Dendritic cell treated with granulocyte-macrophage colony-stimulating factor and Interleukin-4, amounts not matched to agents 40 ng/mL and 50 ng/mL, for 4 days (primary cell): ENCODE measurements at regions of chr13 and their contacts with region 1.

Region 1: DNA sequence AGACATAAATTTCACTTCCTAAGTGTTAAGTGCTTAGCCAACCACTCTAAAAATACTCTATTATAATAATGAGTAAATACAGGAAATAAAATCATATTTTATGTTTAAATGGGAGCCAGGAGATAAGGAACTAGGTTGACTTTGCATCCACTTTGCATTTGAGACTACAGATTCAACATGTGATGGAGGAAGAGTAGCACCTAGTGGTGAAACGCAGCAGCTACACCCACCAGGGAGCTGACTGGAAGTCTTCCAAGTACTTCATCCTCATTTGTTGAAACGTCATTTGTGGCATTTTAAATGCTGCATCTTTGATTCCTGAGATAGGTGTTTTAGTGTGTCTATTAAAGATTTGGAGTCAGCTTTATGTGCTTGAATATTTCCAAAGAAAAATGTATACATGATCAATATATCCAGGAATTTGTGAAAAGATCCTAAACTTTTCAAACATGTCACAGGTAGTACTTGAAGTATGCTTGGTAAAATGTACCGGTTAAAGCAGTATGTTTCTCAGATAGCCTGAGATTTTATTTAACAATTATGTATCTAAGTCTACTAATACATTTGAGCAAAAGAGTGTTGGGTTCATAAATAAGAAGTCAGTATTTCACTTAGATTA is 17.4 kb upstream of the KCTD12 start:
- H3K4me3 Mint-ChIP-seq: no peak overlapping the region
- H3K27ac Mint-ChIP-seq: no peak overlapping the region
- H3K4me1 Mint-ChIP-seq: no peaks in the 10 kb centered on the region
- H3K27me3 Mint-ChIP-seq: peaks cover 21% of the 10 kb centered on the region

Region 2: DNA sequence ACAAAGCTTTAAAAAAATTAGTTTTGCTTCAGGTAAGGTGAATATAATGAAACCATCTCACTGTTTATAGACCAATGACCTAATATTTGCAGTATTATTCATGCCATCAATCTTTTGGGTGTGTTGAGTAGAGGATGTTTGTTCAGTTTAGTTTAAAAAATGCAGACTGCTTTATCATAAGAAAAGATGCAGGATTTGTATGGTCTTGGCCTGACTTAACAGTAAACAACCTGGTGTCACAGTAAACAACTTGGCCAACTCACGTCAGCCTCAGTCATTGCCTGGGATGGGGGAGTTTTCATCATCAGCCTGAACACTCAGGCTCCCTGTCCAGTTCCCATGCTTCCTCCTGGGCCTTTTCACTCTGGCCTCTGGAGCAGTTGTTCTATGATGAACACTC is 1212.5 kb before region 1 on chr13:
- intact Hi-C with region 1: loop called (anchors 10 kb)
- H3K4me3 Mint-ChIP-seq: no peak overlapping the region
- H3K27ac Mint-ChIP-seq: no peak overlapping the region
- H3K4me1 Mint-ChIP-seq: no peaks in the 10 kb centered on the region
- H3K27me3 Mint-ChIP-seq: no peaks in the 10 kb centered on the region

Region 3: DNA sequence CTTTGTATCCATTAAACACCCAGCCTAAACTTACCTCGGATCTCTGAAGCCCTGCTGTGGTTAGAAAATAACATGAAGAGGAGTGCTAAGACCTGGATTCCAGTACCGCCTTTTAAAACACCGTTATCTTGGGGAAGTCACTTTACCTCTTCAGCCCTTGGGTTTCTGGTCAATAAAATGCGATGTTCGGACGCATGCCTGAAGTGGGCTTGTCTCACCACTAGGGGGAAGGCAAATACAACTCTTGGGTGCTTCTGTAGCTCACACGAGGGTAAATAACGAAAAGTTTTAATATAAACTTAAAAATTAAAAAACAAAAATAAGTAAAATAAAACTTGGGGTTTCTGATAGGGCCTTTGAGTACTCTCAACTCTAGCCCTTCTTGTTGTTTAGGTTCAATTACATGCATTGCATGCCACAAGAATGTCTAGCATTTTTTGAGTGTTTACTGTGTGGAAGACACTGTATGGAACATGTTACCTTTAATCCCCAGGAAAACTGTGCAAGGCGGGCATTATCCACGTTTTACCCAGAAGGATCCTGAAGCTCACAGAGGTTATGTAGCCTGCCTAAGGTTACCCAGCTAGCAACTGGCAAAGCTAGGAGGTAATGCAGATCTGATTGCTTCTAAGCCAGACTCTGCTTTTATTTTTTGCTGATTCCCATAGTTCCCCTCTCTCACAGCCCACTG is 1027.1 kb before region 1 on chr13:
- intact Hi-C with region 1: loop called (anchors 5 kb)
- H3K4me3 Mint-ChIP-seq: no peak overlapping the region
- H3K27ac Mint-ChIP-seq: no peak overlapping the region
- H3K4me1 Mint-ChIP-seq: peaks cover 41% of the 10 kb centered on the region
- H3K27me3 Mint-ChIP-seq: peaks cover 14% of the 10 kb centered on the region

Region 4: GRCh38 chr13:76473552-76474134 is 430.0 kb before region 1 on chr13:
- intact Hi-C with region 1: loop called (anchors 5 kb)
- H3K4me3 Mint-ChIP-seq: no peak overlapping the region
- H3K27ac Mint-ChIP-seq: no peak overlapping the region
- H3K4me1 Mint-ChIP-seq: no peaks in the 10 kb centered on the region
- H3K27me3 Mint-ChIP-seq: no peaks in the 10 kb centered on the region

Region 5: GRCh38 chr13:76667551-76667950 is 236.1 kb before region 1 on chr13:
- intact Hi-C with region 1: loop called (anchors 1 kb)
- H3K4me3 Mint-ChIP-seq: no peak overlapping the region
- H3K27ac Mint-ChIP-seq: no peak overlapping the region
- H3K4me1 Mint-ChIP-seq: peaks cover 40% of the 10 kb centered on the region
- H3K27me3 Mint-ChIP-seq: no peaks in the 10 kb centered on the region

Region 6: DNA sequence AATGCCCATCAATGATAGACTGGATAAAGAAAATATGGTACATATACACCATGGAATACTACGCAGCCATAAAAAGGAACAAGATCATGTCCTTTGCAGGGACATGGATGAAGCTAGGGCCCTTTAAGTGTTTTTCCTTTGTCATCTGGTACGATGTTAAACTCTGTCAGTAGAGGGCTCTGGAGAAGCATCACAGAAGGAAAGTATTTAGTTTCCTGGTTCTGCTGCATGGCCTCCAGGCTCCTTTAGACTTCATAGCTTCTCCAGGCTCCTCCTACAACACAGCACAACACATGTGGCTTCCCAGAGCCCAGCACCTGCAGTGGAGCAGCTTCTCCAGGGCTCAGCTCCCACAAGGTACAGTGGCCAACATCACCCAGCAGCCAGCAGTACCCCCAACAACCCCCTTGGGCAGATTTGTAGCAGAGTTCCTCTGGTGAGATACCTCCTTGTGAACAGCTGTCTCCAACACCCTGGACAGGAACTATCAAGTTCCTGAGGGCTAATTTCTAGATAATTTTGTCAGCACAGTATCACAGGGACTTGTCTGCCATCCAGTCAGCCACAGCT is 80.9 kb before region 1 on chr13:
- intact Hi-C with region 1: loop called (anchors 2 kb)
- H3K4me3 Mint-ChIP-seq: peak overlapping the region; percentile 44
- H3K27ac Mint-ChIP-seq: peak overlapping the region; percentile 81
- H3K4me1 Mint-ChIP-seq: peaks cover 45% of the 10 kb centered on the region
- H3K27me3 Mint-ChIP-seq: no peaks in the 10 kb centered on the region

Region 7: DNA sequence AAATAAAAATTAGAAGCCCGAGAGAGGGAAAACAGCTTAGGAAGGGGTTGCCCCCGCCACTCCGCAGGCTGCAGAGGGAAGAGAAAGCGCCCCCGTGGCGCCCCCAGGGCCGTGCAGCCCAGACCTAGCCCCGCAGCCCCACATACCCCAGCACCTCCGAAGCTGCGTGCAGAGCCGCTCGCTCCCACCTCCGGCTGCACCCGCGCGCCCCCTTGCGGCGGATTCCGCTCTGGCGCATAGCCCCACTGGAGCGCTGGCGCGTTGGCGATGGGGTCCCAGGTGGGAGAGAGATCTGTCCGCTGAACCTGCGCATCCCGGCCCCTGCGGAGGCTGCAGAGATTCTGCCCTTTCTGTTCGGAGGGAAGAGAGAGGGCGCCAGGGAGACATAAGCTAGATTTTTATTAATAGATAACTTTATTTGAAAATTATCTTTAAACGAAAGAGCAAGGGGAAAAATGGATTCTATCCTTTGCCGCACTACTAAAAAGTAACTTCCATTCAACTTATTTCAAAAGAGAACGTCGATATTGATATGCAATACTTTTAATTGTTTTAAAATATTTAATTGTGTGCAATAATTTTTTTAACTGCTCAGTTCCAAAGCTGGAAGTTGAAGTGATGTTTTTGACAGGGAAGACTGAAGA is 76.5 kb after region 1 on chr13:
- intact Hi-C with region 1: loop called (anchors 5 kb)
- H3K4me3 Mint-ChIP-seq: peak overlapping the region; percentile 40
- H3K27ac Mint-ChIP-seq: no peak overlapping the region
- H3K4me1 Mint-ChIP-seq: peaks cover 5% of the 10 kb centered on the region
- H3K27me3 Mint-ChIP-seq: peaks cover 33% of the 10 kb centered on the region